ENCODE measurements at regions of chr17 and their contacts with region 1.

Region 1: DNA sequence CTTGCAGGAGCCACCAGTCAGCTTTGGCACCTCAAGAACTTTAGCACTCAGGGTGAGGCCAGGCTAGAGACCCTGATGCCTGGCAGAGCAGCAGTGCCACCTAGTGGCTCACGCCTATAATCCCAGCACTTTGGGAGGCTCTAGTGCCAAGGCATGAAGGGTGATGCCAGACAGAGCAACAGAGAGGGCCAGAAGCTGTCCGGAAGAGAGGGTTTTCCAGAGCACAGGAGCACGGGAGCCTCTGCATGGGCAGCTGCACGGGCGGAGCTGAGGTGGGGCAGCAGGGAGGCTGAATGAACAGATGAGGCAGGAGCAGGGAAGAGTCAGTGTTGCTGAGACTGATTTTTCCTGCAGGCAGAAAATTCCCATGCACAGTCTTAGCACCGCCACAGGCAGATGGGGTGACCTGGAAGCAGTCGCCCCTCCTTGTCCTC is 38.9 kb downstream of the MYH3 start:
- DNase-seq: peak; percentile 79
- ATAC-seq: peak; percentile 88
- H3K4me3 Mint-ChIP-seq: no peak overlapping the region
- H3K27ac Mint-ChIP-seq: no peak overlapping the region
- H3K4me1 Mint-ChIP-seq: no peaks in the 10 kb centered on the region
- H3K27me3 Mint-ChIP-seq: peaks cover 4% of the 10 kb centered on the region

Region 2: GRCh38 chr17:9729034-9729650 is 889.1 kb before region 1 on chr17:
- CTCF ChIA-PET with region 1: no interaction called
- POLR2A ChIA-PET with region 1: no interaction called
- intact Hi-C with region 1: loop called in 1 of 2 experiments (anchors 5 kb)
- DNase-seq: no peak
- ATAC-seq: peak; percentile 33
- H3K4me3 Mint-ChIP-seq: no peak overlapping the region
- H3K27ac Mint-ChIP-seq: no peak overlapping the region
- H3K4me1 Mint-ChIP-seq: no peaks in the 10 kb centered on the region
- H3K27me3 Mint-ChIP-seq: no peaks in the 10 kb centered on the region

Region 3: GRCh38 chr17:9924735-9925191 is 693.5 kb before region 1 on chr17:
- CTCF ChIA-PET with region 1: interaction called, 4 read pairs
- POLR2A ChIA-PET with region 1: no interaction called
- intact Hi-C with region 1: loop called in 1 of 2 experiments (anchors 5 kb)
- DNase-seq: no peak
- ATAC-seq: peak; percentile 58
- H3K4me3 Mint-ChIP-seq: no peak overlapping the region
- H3K27ac Mint-ChIP-seq: no peak overlapping the region
- H3K4me1 Mint-ChIP-seq: no peaks in the 10 kb centered on the region
- H3K27me3 Mint-ChIP-seq: no peaks in the 10 kb centered on the region

Region 4: GRCh38 chr17:10295728-10296343 is 322.4 kb before region 1 on chr17:
- CTCF ChIA-PET with region 1: interaction called, 3 read pairs
- POLR2A ChIA-PET with region 1: no interaction called
- intact Hi-C with region 1: loop called in 1 of 2 experiments (anchors 1 kb)
- DNase-seq: peak; percentile 66
- ATAC-seq: peak; percentile 55
- H3K4me3 Mint-ChIP-seq: no peak overlapping the region
- H3K27ac Mint-ChIP-seq: no peak overlapping the region
- H3K4me1 Mint-ChIP-seq: no peaks in the 10 kb centered on the region
- H3K27me3 Mint-ChIP-seq: peaks cover 9% of the 10 kb centered on the region

Region 5: DNA sequence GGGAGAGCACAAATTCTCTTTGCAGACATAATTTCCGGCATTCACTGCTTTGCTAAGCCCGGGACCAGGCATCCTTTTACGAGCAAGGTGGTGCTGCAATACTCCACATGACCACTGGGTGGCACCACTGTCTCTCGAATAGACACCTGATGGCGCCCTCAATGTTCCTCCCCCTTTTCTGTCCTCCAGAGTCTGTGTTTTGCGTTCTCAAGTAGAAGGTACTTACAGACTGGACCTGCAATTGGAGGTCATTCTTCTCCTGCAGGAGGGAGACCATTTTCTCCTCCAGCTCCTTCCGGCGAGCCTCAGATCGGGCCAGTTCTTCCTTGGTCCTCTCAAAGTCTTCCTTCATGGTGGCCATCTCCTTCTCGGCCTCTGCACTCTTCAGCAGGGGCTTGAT is 290.6 kb before region 1 on chr17:
- CTCF ChIA-PET with region 1: interaction called, 41 read pairs
- POLR2A ChIA-PET with region 1: no interaction called
- intact Hi-C with region 1: loop called (anchors 1 kb)
- DNase-seq: peak; percentile 87
- ATAC-seq: peak; percentile 73
- H3K4me3 Mint-ChIP-seq: no peak overlapping the region
- H3K27ac Mint-ChIP-seq: no peak overlapping the region
- H3K4me1 Mint-ChIP-seq: no peaks in the 10 kb centered on the region
- H3K27me3 Mint-ChIP-seq: peaks cover 3% of the 10 kb centered on the region

Region 6: DNA sequence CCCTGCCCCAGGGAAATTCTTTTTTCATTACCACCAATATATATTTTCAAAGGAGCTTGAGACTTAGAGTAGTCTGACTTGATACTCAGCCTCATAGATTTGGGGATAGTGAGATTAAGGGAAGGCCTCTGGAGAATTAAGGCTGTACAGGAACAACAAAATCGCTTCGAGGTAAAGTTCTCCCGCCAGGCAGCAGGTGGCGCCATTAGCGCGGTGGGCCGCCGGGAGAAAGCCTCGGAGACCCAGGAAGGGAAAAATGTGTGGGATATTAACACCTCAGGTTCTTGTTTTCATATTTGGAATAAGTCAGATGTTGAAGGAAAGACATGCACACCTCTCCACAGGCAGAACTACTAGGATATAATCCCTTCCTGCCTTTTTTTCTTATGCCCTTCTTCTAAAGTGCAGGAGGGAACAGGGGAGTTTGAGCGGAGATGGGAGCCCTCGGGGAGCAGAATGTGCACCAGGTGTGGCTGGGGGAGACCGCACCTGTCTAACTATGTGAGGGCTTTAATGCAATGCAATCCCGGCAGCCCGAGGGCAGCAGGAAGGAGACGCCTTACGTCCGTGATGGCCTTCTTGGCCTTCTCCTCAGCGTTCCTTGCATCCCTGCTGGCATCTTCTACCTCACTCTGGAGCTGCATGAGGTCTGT is 13.0 kb after region 1 on chr17:
- CTCF ChIA-PET with region 1: interaction called, 70 read pairs
- POLR2A ChIA-PET with region 1: no interaction called
- intact Hi-C with region 1: no loop called
- DNase-seq: peak; percentile 45
- ATAC-seq: no peak
- H3K4me3 Mint-ChIP-seq: no peak overlapping the region
- H3K27ac Mint-ChIP-seq: no peak overlapping the region
- H3K4me1 Mint-ChIP-seq: peaks cover 2% of the 10 kb centered on the region
- H3K27me3 Mint-ChIP-seq: no peaks in the 10 kb centered on the region

Region 7: DNA sequence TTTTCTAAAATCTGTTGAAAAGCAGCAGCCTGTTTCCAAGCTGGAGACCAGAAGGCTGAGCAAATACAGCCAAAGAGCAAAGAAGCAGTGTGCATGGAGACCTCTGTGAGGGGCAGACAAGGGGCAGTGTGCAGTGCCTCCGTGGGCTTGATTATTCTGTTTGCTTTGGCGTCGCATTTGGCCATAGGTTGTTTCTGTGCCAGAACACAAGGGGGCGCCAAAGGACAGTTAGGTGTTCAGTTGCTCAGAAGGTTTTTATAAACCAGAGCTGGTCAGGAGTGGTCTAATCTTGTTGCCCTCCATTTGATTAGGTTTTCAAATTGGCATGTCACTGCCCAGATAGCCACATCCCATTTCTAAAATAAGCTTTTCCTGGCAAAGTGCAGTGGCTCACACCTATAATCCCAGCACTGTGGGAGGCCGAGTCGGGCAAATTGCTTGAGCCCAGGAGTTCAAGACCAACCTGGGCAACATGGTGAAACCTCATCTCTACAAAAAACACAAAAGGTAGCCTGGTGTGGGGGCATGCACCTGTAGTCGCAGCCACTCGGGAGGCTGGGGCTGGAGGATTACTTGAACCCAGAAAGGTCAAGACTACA is 28.3 kb after region 1 on chr17:
- CTCF ChIA-PET with region 1: interaction called, 16 read pairs
- POLR2A ChIA-PET with region 1: no interaction called
- intact Hi-C with region 1: no loop called
- DNase-seq: peak; percentile 87
- ATAC-seq: peak; percentile 63
- H3K4me3 Mint-ChIP-seq: no peak overlapping the region
- H3K27ac Mint-ChIP-seq: no peak overlapping the region
- H3K4me1 Mint-ChIP-seq: no peaks in the 10 kb centered on the region
- H3K27me3 Mint-ChIP-seq: no peaks in the 10 kb centered on the region

Region 8: GRCh38 chr17:11023639-11024479 is 405.6 kb after region 1 on chr17:
- CTCF ChIA-PET with region 1: no interaction called
- POLR2A ChIA-PET with region 1: no interaction called
- intact Hi-C with region 1: no loop called
- DNase-seq: no peak
- ATAC-seq: no peak
- H3K4me3 Mint-ChIP-seq: no peak overlapping the region
- H3K27ac Mint-ChIP-seq: no peak overlapping the region
- H3K4me1 Mint-ChIP-seq: no peaks in the 10 kb centered on the region
- H3K27me3 Mint-ChIP-seq: peaks cover 3% of the 10 kb centered on the region